CD4-positive, alpha-beta memory T cell (primary cell): ENCODE measurements at regions of chr9 and their contacts with region 1.

Region 1: GRCh38 chr9:114738581-114739316 is 56.8 kb upstream of the TEX48 start:
- DNase-seq: peak; percentile 73 to 75 (median 74)
- H3K4me3 ChIP-seq: no peak overlapping the region
- H3K4me3 Mint-ChIP-seq: peak overlapping the region in 3 of 8 donors; percentile 16 to 64 (median 36)
- H3K27ac ChIP-seq: no peak overlapping the region
- H3K27ac Mint-ChIP-seq: peak overlapping the region; percentile 67 to 95 (median 91)
- H3K4me1 ChIP-seq: peaks cover 44% of the 10 kb centered on the region
- H3K4me1 Mint-ChIP-seq: peaks cover 34 to 54% (median 43%) of the 10 kb centered on the region in 4 donors
- H3K27me3 ChIP-seq: no peaks in the 10 kb centered on the region
- H3K27me3 Mint-ChIP-seq: no peaks in the 10 kb centered on the region

Region 2: DNA sequence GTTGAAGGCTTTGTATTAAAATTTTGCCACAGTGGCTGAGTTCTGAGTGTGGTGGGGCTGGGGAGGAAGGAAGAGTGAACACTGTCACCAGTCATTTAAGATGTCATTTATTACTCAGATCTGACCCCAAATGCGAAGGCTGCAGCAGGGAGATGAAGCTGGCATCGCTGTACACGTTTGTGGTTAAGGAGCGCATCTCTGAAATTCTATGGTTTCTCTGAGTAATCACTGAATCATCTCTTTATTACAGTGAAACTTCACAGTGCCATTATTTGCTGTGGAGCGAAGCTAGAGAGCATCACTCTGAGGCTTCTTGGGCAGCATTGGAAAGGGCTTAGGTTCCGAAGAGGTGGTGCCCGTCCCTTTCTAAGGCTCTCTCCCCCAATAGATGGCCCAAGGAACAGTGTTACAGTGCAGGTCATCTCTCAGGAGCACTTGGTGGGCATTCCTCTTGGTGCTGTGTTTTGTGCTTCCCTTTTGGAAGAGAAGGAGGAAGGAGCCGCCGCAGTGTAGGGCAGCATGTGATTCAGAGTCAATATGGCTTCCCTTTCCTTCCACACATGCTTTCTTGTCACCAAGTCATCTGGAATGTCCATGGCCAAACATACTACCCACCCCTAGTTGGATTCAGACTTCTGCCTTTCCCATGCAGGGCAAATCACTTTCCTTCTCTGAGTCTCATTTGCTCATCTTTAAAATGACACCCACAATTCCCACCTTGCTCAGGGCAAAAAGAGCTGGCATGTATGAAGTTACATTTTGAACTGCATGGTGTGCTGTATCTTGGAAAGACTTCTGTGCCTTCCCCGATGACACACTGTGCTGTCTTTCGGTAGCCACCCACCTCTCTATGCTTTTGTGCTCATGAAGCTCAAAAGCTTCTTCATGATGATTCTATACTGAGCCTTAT is 47.4 kb before region 1 on chr9:
- CTCF ChIA-PET with region 1: interaction called, 7 read pairs
- POLR2A ChIA-PET with region 1: interaction called, 8 read pairs
- intact Hi-C with region 1: loop called (anchors 2 kb)
- DNase-seq: peak; percentile 64 to 86 (median 75)
- H3K4me3 ChIP-seq: peak overlapping the region; percentile 4 to 46
- H3K4me3 Mint-ChIP-seq: peak overlapping the region; percentile 40 to 77 (median 72)
- H3K27ac ChIP-seq: peak overlapping the region; percentile 54
- H3K27ac Mint-ChIP-seq: peak overlapping the region; percentile 65 to 96 (median 93)
- H3K4me1 ChIP-seq: peaks cover 41% of the 10 kb centered on the region
- H3K4me1 Mint-ChIP-seq: peaks cover 28 to 45% (median 31%) of the 10 kb centered on the region in 4 donors
- H3K27me3 ChIP-seq: no peaks in the 10 kb centered on the region
- H3K27me3 Mint-ChIP-seq: no peaks in the 10 kb centered on the region

Region 3: DNA sequence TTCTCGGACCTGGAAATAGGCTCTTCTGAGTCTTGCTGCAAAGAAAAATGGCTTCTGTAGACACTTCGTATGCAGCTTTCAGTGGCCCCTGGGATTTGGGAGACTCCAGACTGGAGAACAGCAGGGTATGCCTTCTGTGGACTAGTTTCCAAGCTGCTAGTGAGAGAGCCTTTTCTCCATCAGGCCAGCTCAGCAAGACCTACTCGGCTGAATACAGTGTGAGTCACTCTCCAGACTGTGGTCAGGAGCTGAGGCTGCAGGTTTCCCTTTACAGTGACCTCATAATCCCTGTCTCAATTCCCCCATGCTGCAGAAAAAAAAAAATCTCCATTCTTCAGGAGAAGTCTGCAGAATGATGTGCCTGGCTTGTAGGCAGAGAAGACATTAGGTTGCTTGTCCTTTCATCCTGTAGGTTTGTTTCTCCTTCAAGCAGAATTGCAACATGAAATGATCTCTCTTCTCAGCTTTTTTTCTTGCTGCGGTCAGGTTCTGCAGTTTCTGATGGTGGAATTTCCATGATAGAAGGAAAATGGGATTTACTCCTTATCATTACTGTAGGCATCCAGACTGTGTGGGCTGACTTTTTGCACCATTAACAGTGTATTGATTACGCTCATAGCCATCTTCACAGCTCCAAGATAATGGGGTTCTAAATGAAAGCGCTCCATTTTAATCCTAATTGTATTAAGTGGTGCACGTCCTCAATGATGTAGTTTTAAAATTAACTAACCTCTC is 270.0 kb after region 1 on chr9:
- CTCF ChIA-PET with region 1: interaction called, 25 read pairs
- POLR2A ChIA-PET with region 1: no interaction called
- intact Hi-C with region 1: no loop called
- DNase-seq: no peak
- H3K4me3 ChIP-seq: no peak overlapping the region
- H3K4me3 Mint-ChIP-seq: no peak overlapping the region
- H3K27ac ChIP-seq: no peak overlapping the region
- H3K27ac Mint-ChIP-seq: no peak overlapping the region
- H3K4me1 ChIP-seq: peaks cover 31% of the 10 kb centered on the region
- H3K4me1 Mint-ChIP-seq: peaks cover 22 to 41% (median 26%) of the 10 kb centered on the region in 4 donors
- H3K27me3 ChIP-seq: no peaks in the 10 kb centered on the region
- H3K27me3 Mint-ChIP-seq: peaks cover 0 to 3% of the 10 kb centered on the region in 2 donors

Region 4: DNA sequence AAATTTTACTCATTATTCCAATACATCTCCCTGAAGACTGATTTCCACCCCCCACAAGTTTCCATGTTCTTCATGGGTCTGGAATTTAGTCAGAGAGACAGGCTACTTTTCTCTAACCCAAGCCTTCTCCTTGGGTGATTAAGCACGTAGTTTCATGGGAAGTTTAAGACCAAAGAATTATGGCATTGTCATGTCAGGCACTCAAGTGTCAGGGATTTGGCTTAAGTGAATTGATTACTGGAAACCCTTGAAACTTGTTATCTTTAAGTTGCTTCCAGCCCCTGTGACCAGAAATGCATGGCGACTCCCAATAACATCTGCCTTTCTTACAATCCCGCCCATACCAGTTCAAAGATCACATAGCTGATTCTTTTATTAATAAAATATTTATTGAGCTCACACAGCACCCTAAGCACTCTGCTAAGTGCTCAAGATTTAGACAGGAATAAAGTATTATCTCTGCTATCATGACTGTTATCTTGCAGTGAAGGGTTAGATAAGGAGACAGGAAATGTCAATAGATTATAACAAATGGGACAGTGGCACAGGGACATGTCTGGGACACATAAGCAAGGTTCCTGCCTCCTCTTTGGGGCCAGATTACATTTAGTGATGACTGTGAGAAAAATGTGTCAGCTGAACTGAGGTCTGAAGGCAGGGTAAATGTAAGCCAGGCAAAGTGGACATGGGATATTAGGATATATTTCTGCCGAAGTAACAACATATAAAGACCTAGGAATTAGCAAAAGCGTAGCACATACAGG is 620.5 kb after region 1 on chr9:
- CTCF ChIA-PET with region 1: no interaction called
- POLR2A ChIA-PET with region 1: no interaction called
- intact Hi-C with region 1: no loop called
- DNase-seq: no peak
- H3K4me3 ChIP-seq: no peak overlapping the region
- H3K4me3 Mint-ChIP-seq: no peak overlapping the region
- H3K27ac ChIP-seq: no peak overlapping the region
- H3K27ac Mint-ChIP-seq: no peak overlapping the region
- H3K4me1 ChIP-seq: no peaks in the 10 kb centered on the region
- H3K4me1 Mint-ChIP-seq: no peaks in the 10 kb centered on the region
- H3K27me3 ChIP-seq: no peaks in the 10 kb centered on the region
- H3K27me3 Mint-ChIP-seq: peaks cover 4% of the 10 kb centered on the region in 2 donors